ENCODE measurements at regions of chr12 and their contacts with region 1.

Region 1: GRCh38 chr12:120445911-120446843 is at the starts of genes GATC and TRIAP1:
- DNase-seq: peak; percentile 75 to 97
- H3K4me3 ChIP-seq: peak within 1 kb of the TSS; percentile 98
- CTCF ChIP-seq: no peak
- POLR2A ChIP-seq: no peak
- total RNA-seq, gene GATC: 19.3 to 24.1 (median 20.1) TPM
- total RNA-seq, gene TRIAP1: 9.6 to 20.2 (median 16.1) TPM

Region 2: DNA sequence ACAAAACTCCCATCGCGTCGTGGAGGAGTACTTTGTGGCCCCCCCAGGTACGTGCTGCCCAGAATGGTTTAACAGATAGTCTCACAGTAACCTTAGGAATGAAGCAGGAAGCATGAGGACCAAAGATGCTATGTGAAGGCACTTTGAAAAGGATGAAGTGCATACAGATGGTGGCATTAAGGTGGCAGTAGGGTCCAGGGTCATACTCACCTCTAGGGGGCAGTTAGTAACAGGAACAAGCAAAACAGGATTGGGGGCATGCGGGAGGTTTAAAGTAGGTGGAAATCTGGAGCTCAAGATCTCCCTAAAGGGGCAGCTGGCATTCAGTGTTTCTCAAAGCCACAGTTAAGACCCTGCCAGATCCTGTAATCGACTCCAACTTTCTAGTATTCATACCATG is 11.0 kb after region 1 on chr12:
- intact Hi-C with region 1: no loop called
- DNase-seq: no peak
- H3K4me3 ChIP-seq: no peak overlapping the region
- CTCF ChIP-seq: no peak
- POLR2A ChIP-seq: no peak

Region 3: DNA sequence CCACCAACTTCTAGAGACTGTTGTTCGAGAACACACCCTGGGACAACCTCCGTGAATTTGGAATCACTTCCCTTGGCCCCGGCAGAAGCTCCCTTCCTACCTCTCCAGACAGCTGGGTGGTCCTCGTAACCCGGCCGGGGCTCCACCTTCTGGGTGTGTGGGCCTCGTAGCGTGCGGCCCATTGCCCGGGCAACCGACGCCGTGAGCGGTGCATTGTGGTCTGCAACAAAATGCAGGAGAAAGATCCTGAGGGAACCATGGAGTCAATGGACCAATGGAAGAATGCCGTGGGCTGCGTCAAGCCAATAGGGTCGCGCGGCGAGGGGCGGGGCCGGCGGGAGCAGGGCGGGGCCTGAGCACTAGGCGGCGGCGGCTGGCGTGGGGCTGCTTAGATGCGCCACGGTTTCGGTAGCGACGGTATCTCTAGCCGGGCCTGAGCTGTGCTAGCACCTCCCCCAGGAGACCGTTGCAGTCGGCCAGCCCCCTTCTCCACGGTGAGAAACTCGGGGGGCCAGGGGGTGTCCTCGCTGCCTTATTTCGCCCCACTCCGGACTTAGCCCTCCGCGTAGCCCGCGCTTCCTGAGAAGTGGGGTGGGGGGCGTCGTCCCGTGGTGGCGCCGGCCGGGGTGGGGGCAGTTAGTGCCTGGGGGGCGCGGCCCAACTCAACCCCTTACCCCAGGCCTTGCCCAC is 49.7 kb after region 1 on chr12 and contains the start of gene DYNLL1:
- intact Hi-C with region 1: no loop called
- DNase-seq: peak; percentile 95 to 99
- H3K4me3 ChIP-seq: peak within 1 kb of the TSS; percentile 74
- CTCF ChIP-seq: peak in 1 of 3 donors; percentile 69
- POLR2A ChIP-seq: peak in 1 of 2 donors; percentile 58
- total RNA-seq, gene DYNLL1: 310 to 529 (median 388) TPM

Region 4: GRCh38 chr12:120534703-120535655 is 88.8 kb after region 1 on chr12:
- intact Hi-C with region 1: loop called (anchors 5 kb)
- DNase-seq: peak in 1 of 2 donors; percentile 90
- H3K4me3 ChIP-seq: peak overlapping the region; percentile 99
- CTCF ChIP-seq: no peak
- POLR2A ChIP-seq: no peak

Region 5: GRCh38 chr12:120669055-120669840 is 223.1 kb after region 1 on chr12:
- intact Hi-C with region 1: no loop called
- DNase-seq: no peak
- H3K4me3 ChIP-seq: no peak overlapping the region
- CTCF ChIP-seq: no peak
- POLR2A ChIP-seq: no peak

Measured in lower leg skin (tissue), 4 donors.